Heart left ventricle (tissue), 16 donors: ENCODE measurements at regions of chr2 and their contacts with region 1.

Region 1: DNA sequence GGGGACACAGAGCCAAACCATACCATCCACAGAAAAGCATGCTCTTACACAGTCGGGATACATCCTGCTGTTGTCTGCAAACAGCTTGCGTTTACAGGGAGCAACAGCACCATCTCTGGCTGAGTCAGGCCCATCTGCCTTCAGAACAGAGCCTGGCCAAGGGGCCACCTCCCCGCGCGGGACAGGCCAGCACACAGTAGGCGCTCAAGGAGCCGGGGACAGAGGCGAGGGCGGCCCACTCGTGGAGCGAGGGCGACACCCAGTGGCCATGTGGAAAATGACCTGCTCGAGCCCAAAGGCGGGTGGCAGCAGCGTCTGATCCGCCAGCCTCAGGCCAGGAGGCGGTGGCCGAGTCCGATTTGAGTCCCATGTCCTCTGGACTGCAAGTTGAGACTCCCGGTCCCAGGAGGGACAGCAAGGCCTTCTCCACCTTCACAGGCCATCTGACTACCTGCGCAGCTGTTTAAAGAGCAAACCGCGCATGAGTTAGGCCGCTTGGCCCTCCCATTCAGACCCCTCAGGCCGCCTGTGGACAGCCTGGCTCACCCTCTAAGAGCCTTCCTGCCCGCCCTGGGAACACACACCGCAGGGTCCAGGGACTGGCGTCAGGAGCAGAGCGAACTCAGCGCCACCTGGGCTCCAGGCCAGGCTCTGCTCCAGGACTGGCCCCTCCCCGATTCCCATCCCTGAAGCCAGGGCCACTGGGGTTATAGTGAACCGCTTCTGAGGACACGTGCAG is 38.3 kb downstream of the TTC32 start:
- DNase-seq: peak; percentile 57 to 88 (median 76)
- ATAC-seq: peak; percentile 63 to 90 (median 88)
- H3K4me3 ChIP-seq: peak overlapping the region in 7 of 12 donors; percentile 6 to 46 (median 26)
- H3K27ac ChIP-seq: peak overlapping the region in 1 of 12 donors; percentile 80
- H3K4me1 ChIP-seq: peaks cover 0 to 11% (median 6%) of the 10 kb centered on the region in 12 donors
- H3K27me3 ChIP-seq: no peaks in the 10 kb centered on the region
- CTCF ChIP-seq: peak; percentile 93 to 99 (median 97)
- POLR2A ChIP-seq: peak in 1 of 2 donors; percentile 24

Region 2: GRCh38 chr2:18387441-18388206 is 1475.8 kb before region 1 on chr2:
- intact Hi-C with region 1: loop called in 5 of 10 experiments (anchors 5 to 10 kb)
- DNase-seq: peak in 4 of 5 donors; percentile 64 to 74 (median 66)
- ATAC-seq: peak; percentile 72 to 95 (median 90)
- H3K4me3 ChIP-seq: no peak overlapping the region
- H3K27ac ChIP-seq: peak overlapping the region in 3 of 12 donors; percentile 12 to 47 (median 45)
- H3K4me1 ChIP-seq: peaks cover 0 to 2% (median 0%) of the 10 kb centered on the region in 12 donors
- H3K27me3 ChIP-seq: no peaks in the 10 kb centered on the region
- CTCF ChIP-seq: peak; percentile 89 to 96 (median 94)
- POLR2A ChIP-seq: no peak

Region 3: DNA sequence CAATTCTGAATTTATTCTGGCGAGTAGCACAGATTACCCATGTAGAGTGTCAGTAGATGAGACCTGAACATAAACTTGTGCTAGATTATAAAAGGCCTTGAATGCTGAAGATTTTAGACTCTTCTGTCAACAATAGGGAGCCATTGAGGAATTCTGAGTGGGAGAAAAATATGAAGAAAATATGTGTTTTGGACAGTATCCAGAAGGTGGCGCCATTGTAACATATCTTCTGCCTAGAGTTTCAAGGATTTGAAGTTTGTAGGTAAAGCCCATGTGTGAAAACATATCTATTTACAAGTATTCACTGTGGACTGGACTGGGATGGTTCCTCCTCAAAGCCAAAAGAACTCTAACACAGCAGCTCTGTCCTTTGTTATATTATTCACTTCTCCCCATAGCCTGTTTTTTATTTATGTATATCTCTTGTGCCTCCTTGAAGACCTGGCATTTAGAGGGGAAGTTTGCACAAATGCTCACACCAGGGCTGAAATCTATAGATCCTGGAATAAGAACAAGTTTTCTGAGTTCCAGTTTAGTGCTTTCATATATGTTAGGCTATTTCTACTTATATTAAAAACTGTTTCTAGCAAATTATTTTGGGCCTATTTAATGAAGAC is 1427.9 kb before region 1 on chr2:
- intact Hi-C with region 1: loop called in 5 of 10 experiments (anchors 2 to 10 kb)
- DNase-seq: no peak
- ATAC-seq: peak in 2 of 4 donors; percentile 37 to 38
- H3K4me3 ChIP-seq: no peak overlapping the region
- H3K27ac ChIP-seq: no peak overlapping the region
- H3K4me1 ChIP-seq: peaks cover 0 to 16% (median 0%) of the 10 kb centered on the region in 12 donors
- H3K27me3 ChIP-seq: no peaks in the 10 kb centered on the region
- CTCF ChIP-seq: peak in 11 of 12 donors; percentile 38 to 71 (median 57)
- POLR2A ChIP-seq: no peak

Region 4: GRCh38 chr2:18741895-18742732 is 1121.4 kb before region 1 on chr2:
- intact Hi-C with region 1: loop called in 2 of 10 experiments (anchors 2 to 5 kb)
- DNase-seq: peak; percentile 24 to 61 (median 57)
- ATAC-seq: peak; percentile 57 to 78 (median 74)
- H3K4me3 ChIP-seq: no peak overlapping the region
- H3K27ac ChIP-seq: peak overlapping the region in 6 of 12 donors; percentile 0 to 54 (median 34)
- H3K4me1 ChIP-seq: peaks cover 0 to 29% (median 3%) of the 10 kb centered on the region in 12 donors
- H3K27me3 ChIP-seq: no peaks in the 10 kb centered on the region
- CTCF ChIP-seq: peak in 8 of 12 donors; percentile 7 to 48 (median 37)
- POLR2A ChIP-seq: no peak

Region 5: DNA sequence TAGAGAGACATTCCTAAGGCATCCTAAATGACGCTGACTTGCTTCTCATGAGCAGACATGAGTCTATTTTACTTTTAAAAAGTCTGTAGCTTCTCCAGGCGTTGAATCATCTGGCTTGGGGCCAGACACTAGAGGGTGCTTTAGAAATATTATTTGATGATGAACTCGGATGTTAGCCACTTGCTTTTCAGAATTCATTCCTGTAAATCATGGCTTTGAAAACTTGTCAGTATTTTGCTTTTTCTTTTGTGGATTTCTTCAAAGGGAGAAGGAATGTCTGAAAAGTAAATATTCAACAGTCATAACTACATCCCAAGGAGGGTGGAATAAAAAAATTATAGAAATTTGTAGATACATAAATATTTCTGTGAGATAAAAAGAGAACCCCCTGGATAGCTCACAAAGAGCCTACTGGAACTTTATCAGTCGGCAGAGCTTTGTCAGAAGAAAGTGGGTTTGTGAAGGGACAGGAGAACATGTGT is 875.8 kb before region 1 on chr2:
- intact Hi-C with region 1: loop called in 1 of 10 experiments (anchors 10 kb)
- DNase-seq: peak; percentile 71 to 82 (median 80)
- ATAC-seq: peak in 2 of 4 donors; percentile 57 to 72
- H3K4me3 ChIP-seq: no peak overlapping the region
- H3K27ac ChIP-seq: peak overlapping the region in 1 of 12 donors; percentile 14
- H3K4me1 ChIP-seq: peaks cover 0 to 25% (median 4%) of the 10 kb centered on the region in 12 donors
- H3K27me3 ChIP-seq: no peaks in the 10 kb centered on the region
- CTCF ChIP-seq: peak in 8 of 12 donors; percentile 5 to 56 (median 46)
- POLR2A ChIP-seq: no peak

Region 6: DNA sequence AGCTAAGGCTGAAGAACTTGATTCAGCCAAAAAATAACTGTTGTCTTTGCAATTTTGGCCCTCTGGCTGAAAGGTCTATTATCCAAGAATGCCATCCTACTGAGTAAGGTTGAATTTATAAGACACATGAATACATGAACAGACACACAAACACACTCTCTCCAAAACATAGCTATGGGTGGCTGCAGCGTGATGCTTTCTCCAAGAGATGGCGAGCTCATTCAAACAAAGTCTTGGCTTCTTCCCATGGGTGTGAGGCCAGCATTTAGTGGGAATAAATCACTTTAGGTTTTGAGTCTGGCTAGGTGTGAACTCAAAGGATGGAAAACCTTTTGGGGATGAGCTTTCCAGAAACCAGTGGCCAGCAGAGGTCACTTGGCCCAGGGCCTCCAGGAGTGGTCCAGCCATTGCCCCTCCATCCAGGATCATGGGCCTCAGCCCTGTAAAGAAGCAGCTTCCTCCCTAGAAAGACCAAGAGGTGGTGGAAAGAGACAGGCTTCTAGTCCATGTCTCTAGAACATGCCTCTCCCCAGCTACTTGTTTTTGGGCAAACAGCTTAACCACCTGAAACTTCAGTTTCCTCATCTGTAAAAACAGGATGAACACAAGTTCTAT is 494.0 kb before region 1 on chr2:
- intact Hi-C with region 1: loop called in 6 of 10 experiments (anchors 5 to 10 kb)
- DNase-seq: no peak
- ATAC-seq: no peak
- H3K4me3 ChIP-seq: no peak overlapping the region
- H3K27ac ChIP-seq: no peak overlapping the region
- H3K4me1 ChIP-seq: no peaks in the 10 kb centered on the region
- H3K27me3 ChIP-seq: no peaks in the 10 kb centered on the region
- CTCF ChIP-seq: peak in 4 of 12 donors; percentile 9 to 23 (median 16)
- POLR2A ChIP-seq: no peak

Region 7: DNA sequence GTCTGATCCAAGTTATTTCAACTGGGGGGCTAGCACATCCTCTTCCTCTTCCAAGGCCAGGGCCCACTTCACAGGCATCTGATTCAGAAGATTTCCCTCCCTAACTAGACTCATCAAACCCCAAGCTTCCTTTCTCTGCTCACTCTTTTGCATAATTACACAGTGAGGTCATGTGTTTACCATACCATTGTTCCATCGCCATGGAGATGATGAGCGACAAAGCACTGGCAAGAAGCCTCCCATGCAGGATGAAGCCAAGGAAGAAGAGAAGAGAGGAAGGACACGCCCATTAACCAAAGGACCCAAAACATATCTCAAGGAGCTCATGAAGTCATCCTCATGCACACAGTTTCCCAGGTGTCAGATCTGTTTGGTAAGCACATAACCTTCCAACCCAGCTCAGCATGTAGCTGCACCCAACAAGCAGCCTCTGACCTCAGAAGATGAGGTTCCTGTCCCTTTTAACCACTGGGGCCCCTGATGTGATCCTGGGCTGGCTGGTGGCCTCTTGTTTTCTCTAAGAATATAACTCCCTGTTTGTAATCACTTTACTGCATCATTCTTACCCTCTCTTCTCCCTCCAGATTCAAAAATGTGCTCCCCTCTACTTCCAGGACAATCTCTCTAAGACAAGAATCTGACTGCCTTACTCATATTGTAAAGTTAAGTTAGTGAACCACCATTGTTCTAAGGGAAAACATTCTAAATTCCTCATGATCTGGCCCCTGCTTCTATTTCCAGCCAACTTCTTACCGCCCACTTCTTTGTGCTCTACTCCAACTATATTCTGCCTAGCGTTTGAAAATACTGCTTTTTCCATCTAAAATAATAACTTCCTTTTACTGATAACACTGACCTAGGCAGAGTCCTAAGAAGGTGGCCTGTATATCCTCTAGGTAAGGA is 151.8 kb before region 1 on chr2:
- intact Hi-C with region 1: no loop called
- DNase-seq: peak in 3 of 5 donors; percentile 51 to 65 (median 53)
- ATAC-seq: peak; percentile 65 to 94 (median 77)
- H3K4me3 ChIP-seq: no peak overlapping the region
- H3K27ac ChIP-seq: peak overlapping the region in 10 of 12 donors; percentile 5 to 81 (median 56)
- H3K4me1 ChIP-seq: peaks cover 0 to 18% (median 10%) of the 10 kb centered on the region in 12 donors
- H3K27me3 ChIP-seq: no peaks in the 10 kb centered on the region
- CTCF ChIP-seq: no peak
- POLR2A ChIP-seq: no peak

Region 8: GRCh38 chr2:20106746-20107145 is 243.3 kb after region 1 on chr2:
- intact Hi-C with region 1: no loop called
- DNase-seq: peak; percentile 45 to 83 (median 50)
- ATAC-seq: peak; percentile 45 to 73 (median 69)
- H3K4me3 ChIP-seq: peak overlapping the region in 9 of 12 donors; percentile 21 to 47 (median 29)
- H3K27ac ChIP-seq: no peak overlapping the region
- H3K4me1 ChIP-seq: peaks cover 0 to 7% (median 0%) of the 10 kb centered on the region in 12 donors
- H3K27me3 ChIP-seq: peaks cover 0 to 15% (median 4%) of the 10 kb centered on the region in 9 donors
- CTCF ChIP-seq: peak; percentile 30 to 68 (median 50)
- POLR2A ChIP-seq: no peak